Activated CD4-positive, alpha-beta T cell treated with anti-CD3 and anti-CD28 coated beads, Interleukin-2, amount 10 ng/mL, durations not matched to agents 7 days and 5 days (primary cell): ENCODE measurements at regions of chr17 and their contacts with region 1.

Region 1: GRCh38 chr17:36524428-36524876 is 10.2 kb downstream of the MYO19 start:
- DNase-seq: no peak
- H3K4me3 Mint-ChIP-seq: no peak overlapping the region
- H3K27ac Mint-ChIP-seq: peak overlapping the region; percentile 14
- H3K4me1 Mint-ChIP-seq: peaks cover 24% of the 10 kb centered on the region
- H3K27me3 Mint-ChIP-seq: no peaks in the 10 kb centered on the region

Region 2: DNA sequence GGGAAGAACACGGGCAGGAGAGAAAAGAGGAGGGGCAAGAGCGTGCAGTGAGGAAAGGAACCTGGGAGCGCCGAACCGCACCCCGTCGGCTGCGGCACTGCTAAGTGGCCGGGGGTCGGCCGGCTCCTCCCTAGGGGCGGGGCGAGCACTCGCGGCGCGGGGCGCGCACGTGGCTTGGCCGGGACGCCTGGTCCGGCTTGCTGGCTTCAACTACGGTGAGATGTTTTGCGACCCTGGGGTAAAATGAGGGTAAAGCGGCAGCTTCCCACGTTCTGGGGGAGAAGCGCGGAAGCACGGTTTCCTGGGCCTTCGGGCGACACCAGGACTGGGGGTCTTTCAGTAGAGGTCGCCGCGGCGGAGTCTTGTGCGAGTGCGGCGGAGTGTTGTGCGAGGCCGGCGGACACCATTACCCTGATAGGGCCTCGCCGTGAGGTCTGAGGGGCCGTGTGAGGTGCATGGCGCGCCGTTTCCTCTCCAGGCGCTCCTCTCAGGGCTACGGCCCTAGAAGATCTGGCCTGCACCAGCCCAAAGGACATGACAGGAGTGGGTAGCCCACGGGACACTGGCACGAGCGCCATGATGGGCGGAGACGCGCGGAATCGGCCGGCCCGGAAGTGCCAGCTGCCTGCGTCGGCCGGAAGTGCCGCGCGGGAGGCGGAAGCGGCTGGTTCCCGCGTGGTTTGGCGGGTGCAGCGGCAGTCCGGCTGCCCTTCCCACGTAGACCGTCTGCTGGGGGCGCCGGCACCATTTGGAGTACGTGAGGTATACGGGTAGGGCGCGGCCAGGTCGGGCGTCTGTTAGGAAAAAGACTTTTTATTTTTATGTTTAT is 10.6 kb after region 1 on chr17 and contains the starts of genes MYO19 and PIGW:
- CTCF ChIA-PET with region 1: interaction called, 11 read pairs
- POLR2A ChIA-PET with region 1: no interaction called
- DNase-seq: peak; percentile 87
- H3K4me3 Mint-ChIP-seq: peak within 1 kb of the TSS; percentile 93
- H3K27ac Mint-ChIP-seq: peak within 1 kb of the TSS; percentile 99
- H3K4me1 Mint-ChIP-seq: peaks cover 43% of the 10 kb centered on the region
- H3K27me3 Mint-ChIP-seq: no peaks in the 10 kb centered on the region
- total RNA-seq, gene MYO19: 125 to 127 TPM
- total RNA-seq, gene PIGW: 12.8 to 15.2 TPM